ENCODE measurements at regions of chr11 and their contacts with region 1.

Region 1: DNA sequence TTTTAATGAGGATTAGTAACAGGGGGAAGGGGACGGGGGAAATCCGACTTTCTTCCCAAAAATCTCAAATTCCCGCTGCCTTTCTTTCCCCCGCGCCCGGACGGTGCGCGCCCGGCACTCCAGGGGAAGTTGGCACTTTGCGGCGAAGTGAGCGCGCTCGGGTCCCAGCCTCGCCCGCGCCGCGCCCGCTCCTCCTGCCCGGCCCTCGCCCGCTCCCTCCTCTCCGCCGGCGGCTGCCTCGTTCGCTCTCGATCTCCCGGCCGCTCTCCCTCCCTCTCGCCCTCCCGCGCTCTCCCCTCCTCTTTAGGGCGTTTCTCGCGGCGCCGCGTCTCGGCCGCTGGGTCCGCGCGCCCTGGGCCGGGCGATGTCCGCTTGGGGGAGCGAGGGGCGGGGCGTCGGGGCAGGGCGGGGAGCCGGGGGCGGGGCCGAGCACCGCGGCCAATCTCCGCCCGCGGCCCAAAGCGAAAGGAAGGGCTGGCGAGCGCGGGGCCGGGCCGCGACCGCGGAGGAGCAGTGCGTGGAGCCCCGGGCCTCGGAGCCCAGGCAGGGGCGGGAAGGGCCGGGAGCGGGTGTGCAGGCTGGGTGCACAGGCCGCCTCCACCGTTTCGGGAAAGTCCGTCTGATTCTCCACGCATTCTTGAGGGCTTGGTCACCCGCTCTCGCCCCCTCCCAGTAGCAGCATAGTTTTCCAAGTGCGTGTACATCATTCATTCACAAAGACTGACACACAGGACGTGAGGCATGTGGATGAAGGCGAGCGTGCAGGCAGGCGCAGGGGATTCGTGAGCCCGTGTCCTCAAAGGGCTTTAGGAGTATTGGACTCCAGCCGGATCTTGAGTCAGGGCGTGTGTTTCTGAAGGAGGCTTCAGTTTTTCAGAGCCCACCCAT is 65.1 kb downstream of the ETS1 start:
- DNase-seq: peak; percentile 97
- H3K4me3 ChIP-seq: peak overlapping the region; percentile 68 to 98 (median 97)
- H3K27ac ChIP-seq: peak overlapping the region; percentile 99
- H3K4me1 ChIP-seq: peaks cover 52% of the 10 kb centered on the region
- H3K27me3 ChIP-seq: no peaks in the 10 kb centered on the region
- CTCF ChIP-seq: no peak
- POLR2A ChIP-seq: peak; percentile 69

Region 2: DNA sequence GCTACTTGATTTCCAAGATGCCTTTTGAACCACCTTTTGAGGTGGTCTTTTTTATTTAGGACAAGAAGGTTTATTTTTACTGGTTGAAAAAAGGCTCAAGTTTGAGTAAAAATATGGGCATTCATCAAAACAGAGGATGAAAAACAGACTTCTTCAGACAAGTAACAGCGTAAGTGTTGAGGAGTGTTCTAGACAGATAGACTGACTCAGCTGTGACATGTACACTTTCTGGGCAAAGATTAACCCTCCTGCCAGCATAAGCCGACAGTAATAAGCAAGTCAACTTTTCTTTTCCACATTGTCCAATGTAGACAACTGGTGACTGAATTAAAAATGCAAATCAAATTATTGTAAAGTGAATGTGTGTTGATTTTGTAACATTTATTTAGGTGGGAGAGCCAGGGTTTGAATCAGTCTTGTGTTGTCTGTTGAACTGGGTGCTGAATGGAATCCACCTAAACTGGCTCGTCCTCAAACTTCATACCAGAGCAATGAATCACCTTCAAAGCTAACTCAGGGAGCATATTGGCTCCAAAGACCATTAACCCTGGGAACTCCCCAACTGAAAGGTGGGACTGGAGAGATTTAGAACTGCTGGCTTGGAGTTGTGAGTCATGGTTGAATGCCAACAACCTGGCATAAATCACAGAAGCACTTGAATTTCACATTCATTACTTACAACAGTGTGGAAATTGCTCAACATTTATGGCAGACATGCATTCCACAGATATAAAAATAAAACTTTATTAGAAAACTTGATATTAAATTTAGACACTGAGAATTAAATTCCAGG is 312.0 kb before region 1 on chr11:
- CTCF ChIA-PET with region 1: no interaction called
- POLR2A ChIA-PET with region 1: no interaction called
- dilution Hi-C with region 1: no loop called
- intact Hi-C with region 1: loop called (anchors 1 kb)
- DNase-seq: peak; percentile 98
- H3K4me3 ChIP-seq: peak overlapping the region in 1 of 3 experiments; percentile 44
- H3K27ac ChIP-seq: peak overlapping the region; percentile 97
- H3K4me1 ChIP-seq: peaks cover 49% of the 10 kb centered on the region
- H3K27me3 ChIP-seq: no peaks in the 10 kb centered on the region
- CTCF ChIP-seq: no peak
- POLR2A ChIP-seq: no peak

Region 3: GRCh38 chr11:128342511-128343134 is 179.7 kb before region 1 on chr11:
- CTCF ChIA-PET with region 1: no interaction called
- POLR2A ChIA-PET with region 1: no interaction called
- dilution Hi-C with region 1: no loop called
- intact Hi-C with region 1: loop called (anchors 1 kb)
- DNase-seq: peak; percentile 98
- H3K4me3 ChIP-seq: no peak overlapping the region
- H3K27ac ChIP-seq: peak overlapping the region; percentile 83
- H3K4me1 ChIP-seq: peaks cover 31% of the 10 kb centered on the region
- H3K27me3 ChIP-seq: no peaks in the 10 kb centered on the region
- CTCF ChIP-seq: no peak
- POLR2A ChIP-seq: peak; percentile 47

Region 4: DNA sequence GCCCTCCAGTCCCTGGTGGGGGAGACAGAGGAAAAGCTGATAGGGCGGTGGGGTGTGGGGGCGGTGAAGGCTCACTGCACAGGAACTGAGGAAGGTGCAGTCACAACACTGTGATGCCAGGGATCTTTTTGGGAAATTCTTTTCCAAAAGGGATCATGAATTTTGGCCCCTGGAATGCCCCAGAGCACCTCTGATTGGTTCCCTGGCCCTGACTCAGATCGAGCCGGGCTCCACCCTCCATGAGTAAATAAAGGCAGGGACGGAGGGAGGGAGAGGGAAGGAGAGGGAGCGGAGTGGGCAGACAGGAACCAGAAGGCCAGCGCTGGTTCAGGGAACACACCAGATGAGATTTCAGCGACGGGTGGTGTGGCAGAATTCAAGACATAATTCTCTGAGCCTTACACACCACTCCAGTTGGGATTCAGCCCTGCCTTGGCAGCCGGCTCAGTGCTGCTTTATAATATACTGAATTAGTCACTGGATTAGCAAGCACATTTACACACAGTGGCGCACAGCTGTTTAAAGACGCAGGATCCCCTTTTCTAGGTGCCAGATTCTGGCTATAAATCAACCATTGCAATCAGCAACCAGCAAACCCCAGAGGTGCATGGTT is 15.2 kb before region 1 on chr11:
- CTCF ChIA-PET with region 1: interaction called, 6 read pairs
- POLR2A ChIA-PET with region 1: interaction called, 4 read pairs
- dilution Hi-C with region 1: no loop called
- intact Hi-C with region 1: loop called (anchors 1 kb)
- DNase-seq: peak; percentile 88
- H3K4me3 ChIP-seq: peak overlapping the region in 1 of 3 experiments; percentile 12
- H3K27ac ChIP-seq: peak overlapping the region; percentile 89
- H3K4me1 ChIP-seq: peaks cover 66% of the 10 kb centered on the region
- H3K27me3 ChIP-seq: no peaks in the 10 kb centered on the region
- CTCF ChIP-seq: no peak
- POLR2A ChIP-seq: peak; percentile 57

Region 5: DNA sequence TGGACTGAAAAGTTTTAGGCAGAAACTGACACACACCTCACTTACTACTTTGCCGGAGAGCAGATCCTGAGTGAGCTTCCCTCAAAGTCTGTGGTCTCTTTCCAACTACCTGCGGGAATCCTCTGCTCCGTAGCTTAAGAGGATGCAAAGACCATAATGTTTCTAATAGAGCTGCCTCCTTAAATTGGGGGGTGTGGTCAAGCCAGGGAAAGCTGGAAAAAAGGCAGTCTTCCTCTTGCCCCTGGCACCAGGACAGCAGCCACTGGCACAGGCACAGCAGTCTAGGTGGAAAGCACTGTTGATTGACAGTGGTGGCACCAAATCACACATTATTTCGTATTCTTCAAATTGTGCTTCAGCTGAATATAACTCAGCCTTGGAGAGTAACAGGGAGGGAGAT is 65.2 kb after region 1 on chr11 and contains the start of gene ETS1:
- CTCF ChIA-PET with region 1: no interaction called
- POLR2A ChIA-PET with region 1: no interaction called
- dilution Hi-C with region 1: no loop called
- intact Hi-C with region 1: loop called (anchors 2 kb)
- DNase-seq: peak; percentile 56
- H3K4me3 ChIP-seq: peak within 1 kb of the TSS; percentile 28 to 69 (median 34)
- H3K27ac ChIP-seq: no peak within 1 kb of the TSS
- H3K4me1 ChIP-seq: peaks cover 11% of the 10 kb centered on the region
- H3K27me3 ChIP-seq: peaks cover 15 to 24% of the 10 kb centered on the region in 2 experiments
- CTCF ChIP-seq: no peak
- POLR2A ChIP-seq: no peak
- total RNA-seq, gene ETS1: 108 and 115 TPM in 2 replicates

Region 6: GRCh38 chr11:128757235-128757711 is 235.0 kb after region 1 on chr11:
- CTCF ChIA-PET with region 1: no interaction called
- POLR2A ChIA-PET with region 1: no interaction called
- dilution Hi-C with region 1: no loop called
- intact Hi-C with region 1: loop called (anchors 5 kb)
- DNase-seq: peak; percentile 75
- H3K4me3 ChIP-seq: no peak overlapping the region
- H3K27ac ChIP-seq: peak overlapping the region; percentile 21
- H3K4me1 ChIP-seq: peaks cover 19% of the 10 kb centered on the region
- H3K27me3 ChIP-seq: no peaks in the 10 kb centered on the region
- CTCF ChIP-seq: peak; percentile 55 to 61
- POLR2A ChIP-seq: no peak

Measured in endothelial cell of umbilical vein (primary cell).